ENCODE measurements at regions of chr19 and their contacts with region 1.

Region 1: GRCh38 chr19:46821498-46822409 is 28.9 kb downstream of the AP2S1 start:
- DNase-seq: peak; percentile 49
- H3K4me3 Mint-ChIP-seq: peak overlapping the region; percentile 5
- H3K27ac Mint-ChIP-seq: peak overlapping the region; percentile 46
- H3K4me1 Mint-ChIP-seq: peaks cover 37% of the 10 kb centered on the region
- H3K27me3 Mint-ChIP-seq: no peaks in the 10 kb centered on the region

Region 2: DNA sequence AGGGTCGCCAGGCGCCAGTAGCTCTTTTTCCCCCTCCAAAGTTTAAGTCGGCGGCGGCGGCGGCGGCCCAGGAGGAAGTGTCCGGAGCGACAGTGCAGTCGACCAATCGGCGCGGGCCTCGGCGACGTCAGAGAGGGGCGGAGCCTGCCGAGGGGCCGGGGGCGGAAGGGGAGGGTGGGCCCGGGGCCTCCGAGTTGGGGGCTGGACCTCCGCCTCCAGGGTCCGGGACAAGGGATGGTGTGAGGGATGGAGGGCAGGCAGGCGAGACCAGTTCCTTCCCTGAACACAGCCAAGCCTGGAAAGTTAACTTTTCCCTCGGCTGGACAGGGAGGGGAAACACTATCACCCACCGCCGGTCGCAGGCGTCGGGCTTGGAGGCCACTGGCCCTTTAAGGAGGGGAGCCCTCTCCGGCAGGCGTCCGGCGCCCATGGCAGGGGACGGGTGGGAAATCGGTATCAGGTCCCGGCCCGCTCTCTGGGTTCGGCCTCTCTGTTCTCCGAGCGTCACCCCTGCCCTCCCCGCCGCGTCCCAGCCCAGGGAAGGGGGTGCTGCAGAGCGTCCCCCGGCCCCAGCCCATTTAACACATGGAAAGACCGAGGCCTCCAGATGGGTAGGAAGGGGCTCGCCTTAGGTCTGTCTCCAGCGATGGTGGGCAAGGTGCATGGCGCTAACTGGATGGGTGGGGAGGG is 104.6 kb before region 1 on chr19 and contains the start of gene PRKD2:
- intact Hi-C with region 1: no loop called
- DNase-seq: peak; percentile 84
- H3K4me3 Mint-ChIP-seq: peak within 1 kb of the TSS; percentile 94
- H3K27ac Mint-ChIP-seq: peak within 1 kb of the TSS; percentile 92
- H3K4me1 Mint-ChIP-seq: peaks cover 39% of the 10 kb centered on the region
- H3K27me3 Mint-ChIP-seq: no peaks in the 10 kb centered on the region
- total RNA-seq, gene PRKD2: 77.9 and 79.8 TPM in 2 replicates

Region 3: GRCh38 chr19:46759817-46760333 is 61.9 kb before region 1 on chr19:
- intact Hi-C with region 1: loop called (anchors 5 kb)
- DNase-seq: no peak
- H3K4me3 Mint-ChIP-seq: no peak overlapping the region
- H3K27ac Mint-ChIP-seq: no peak overlapping the region
- H3K4me1 Mint-ChIP-seq: no peaks in the 10 kb centered on the region
- H3K27me3 Mint-ChIP-seq: no peaks in the 10 kb centered on the region

Region 4: DNA sequence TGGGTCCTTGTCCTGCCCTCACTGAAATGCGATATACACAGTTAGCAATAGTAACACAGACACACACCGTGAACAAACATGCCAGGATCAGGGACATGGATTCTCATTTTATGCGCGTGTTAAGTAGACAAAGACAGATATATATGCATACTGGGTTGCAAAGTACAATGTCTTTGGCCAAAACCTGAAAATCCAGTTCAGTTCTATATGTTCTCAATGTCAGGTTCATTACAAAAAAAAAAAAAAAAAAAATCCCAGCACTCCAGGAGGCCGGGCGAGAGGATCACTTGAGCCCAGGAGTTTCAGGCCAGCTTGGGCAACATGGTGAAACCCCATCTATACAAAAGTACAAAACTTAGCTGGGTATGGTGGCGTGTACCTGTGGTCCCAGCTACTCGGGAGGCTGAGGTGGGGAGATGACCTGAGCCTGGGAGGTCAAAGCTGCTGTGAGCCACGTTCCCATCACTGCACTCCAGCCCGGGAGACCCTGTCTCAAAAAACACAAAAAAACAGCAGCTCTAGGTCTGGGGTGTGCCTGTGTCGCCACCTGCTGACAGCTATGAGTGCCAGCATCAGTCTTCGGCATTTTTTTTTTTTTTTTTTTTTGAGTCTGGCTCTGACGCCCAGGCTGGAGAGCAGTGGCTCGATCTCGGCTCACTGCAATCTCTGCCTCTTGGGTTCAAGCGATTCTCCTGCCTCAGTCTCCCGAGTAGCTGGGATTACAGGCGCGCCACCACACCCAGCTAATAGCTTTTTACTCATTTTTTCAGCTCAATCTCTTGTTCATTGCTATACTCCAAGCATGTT is 18.6 kb after region 1 on chr19:
- intact Hi-C with region 1: no loop called
- DNase-seq: peak; percentile 43
- H3K4me3 Mint-ChIP-seq: no peak overlapping the region
- H3K27ac Mint-ChIP-seq: no peak overlapping the region
- H3K4me1 Mint-ChIP-seq: no peaks in the 10 kb centered on the region
- H3K27me3 Mint-ChIP-seq: no peaks in the 10 kb centered on the region

Measured in activated T-helper 2 cell treated with anti-CD3 and anti-CD28 coated beads, Interferon-gamma antibody, Interleukin-2, Interleukin-4, amounts not matched to agents 10 μg/mL and 5 μg/mL and 100 μg/mL, durations not matched to agents 14 hours and 24 hours and 36 hours (primary cell).